Right ventricle myocardium inferior (tissue), 1 donor: ENCODE measurements at regions of chr1 and their contacts with region 1.

Region 1: GRCh38 chr1:211258756-211259637 is at the start of gene RCOR3:
- DNase-seq: peak; percentile 97
- ATAC-seq: peak; percentile 93
- total RNA-seq, gene RCOR3: 46.5 TPM

Region 2: DNA sequence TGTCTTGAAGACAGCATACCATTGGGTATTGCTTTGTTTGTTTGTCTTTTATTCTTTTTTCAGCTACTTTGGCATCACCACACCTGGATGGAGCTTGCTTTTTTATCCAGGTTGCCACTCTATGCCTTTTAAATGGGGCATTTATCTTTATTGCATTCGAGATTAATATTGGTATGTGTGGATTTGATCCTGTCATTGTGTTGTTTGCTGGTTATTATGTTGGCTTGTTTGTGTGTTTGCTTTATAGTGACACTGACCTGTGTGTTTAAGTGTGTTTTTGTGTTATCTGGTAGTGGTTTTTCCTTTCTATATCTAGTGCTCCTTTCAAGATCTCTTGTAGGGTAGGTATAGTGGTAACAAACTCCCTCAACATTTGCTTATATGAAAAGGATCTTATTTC is 100.1 kb before region 1 on chr1:
- intact Hi-C with region 1: no loop called
- DNase-seq: no peak
- ATAC-seq: no peak

Region 3: GRCh38 chr1:211229365-211229759 is 29.6 kb before region 1 on chr1:
- intact Hi-C with region 1: no loop called
- DNase-seq: no peak
- ATAC-seq: no peak

Region 4: DNA sequence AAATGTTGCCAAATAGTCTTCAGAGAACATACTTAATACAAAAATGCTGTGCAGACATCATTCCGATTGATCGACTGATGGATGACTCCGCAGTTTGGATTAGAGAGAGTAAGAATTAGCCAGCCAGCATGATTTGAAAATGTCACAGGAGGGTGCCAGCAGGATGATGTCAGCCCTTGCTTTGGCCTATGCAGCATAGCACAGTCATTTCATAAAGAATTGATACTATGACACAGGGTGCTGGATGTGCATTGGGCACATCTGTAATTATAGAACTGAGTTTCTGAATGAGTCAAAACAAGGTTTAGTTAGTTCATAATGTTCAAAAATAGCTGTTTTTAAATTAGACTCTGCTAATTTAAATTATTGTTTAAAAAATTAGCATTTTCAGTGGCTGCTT is 46.0 kb after region 1 on chr1:
- intact Hi-C with region 1: loop called (anchors 5 kb)
- DNase-seq: no peak
- ATAC-seq: peak; percentile 48

Region 5: GRCh38 chr1:211326528-211327345 is 67.7 kb after region 1 on chr1 and contains the start of gene TRAF5:
- intact Hi-C with region 1: no loop called
- DNase-seq: peak; percentile 84
- ATAC-seq: peak; percentile 80
- total RNA-seq, gene TRAF5: 2.1 TPM

Region 6: GRCh38 chr1:211382714-211383480 is 123.9 kb after region 1 on chr1:
- intact Hi-C with region 1: loop called (anchors 2 kb)
- DNase-seq: peak; percentile 98
- ATAC-seq: peak; percentile 100